Left ventricle myocardium superior (tissue), 1 donor: ENCODE measurements at regions of chr13 and their contacts with region 1.

Region 1: GRCh38 chr13:41751277-41751676 is 209.6 kb downstream of the VWA8 start:
- DNase-seq: peak; percentile 47
- ATAC-seq: peak; percentile 95

Region 2: DNA sequence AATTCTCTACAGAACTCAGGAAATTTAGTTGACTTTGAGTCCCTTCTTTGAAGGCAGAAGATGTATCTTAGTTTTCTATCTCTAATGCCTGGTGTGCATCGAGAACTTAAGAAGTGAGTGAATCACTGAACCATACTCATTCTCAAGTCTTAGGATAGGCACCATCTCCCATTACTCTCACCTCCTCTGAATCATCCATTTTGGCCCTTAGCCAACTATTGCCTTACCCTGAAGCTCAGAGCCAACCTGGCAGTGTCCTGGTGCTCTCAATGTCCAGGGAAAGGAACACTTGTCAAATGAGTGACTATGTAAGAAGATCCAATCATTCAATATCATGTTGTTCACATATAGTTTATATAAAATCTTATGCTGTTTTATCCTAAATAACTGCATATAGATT is 147.4 kb before region 1 on chr13:
- intact Hi-C with region 1: no loop called
- DNase-seq: no peak
- ATAC-seq: peak; percentile 41

Region 3: DNA sequence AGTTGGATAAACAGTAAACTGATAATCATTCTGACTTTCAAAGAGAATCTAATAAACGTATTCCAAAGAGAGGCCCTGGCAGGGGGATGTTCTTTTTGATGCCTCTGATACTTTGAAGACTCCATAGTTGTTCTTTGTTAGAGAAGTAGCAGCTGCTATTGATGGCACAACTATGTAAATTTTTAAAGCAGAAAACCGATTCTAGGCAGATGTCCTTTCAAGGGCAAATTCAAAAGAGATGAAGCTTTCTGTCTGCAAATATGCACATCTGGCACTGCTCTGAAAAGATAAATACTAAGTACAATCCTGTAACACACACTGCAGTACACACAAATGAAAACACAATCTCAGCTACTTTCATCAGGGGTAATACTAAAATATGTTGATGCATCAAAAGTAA is 40.5 kb before region 1 on chr13:
- intact Hi-C with region 1: loop called (anchors 5 kb)
- DNase-seq: no peak
- ATAC-seq: no peak